B cell (primary cell): ENCODE measurements at regions of chr17 and their contacts with region 1.

Region 1: DNA sequence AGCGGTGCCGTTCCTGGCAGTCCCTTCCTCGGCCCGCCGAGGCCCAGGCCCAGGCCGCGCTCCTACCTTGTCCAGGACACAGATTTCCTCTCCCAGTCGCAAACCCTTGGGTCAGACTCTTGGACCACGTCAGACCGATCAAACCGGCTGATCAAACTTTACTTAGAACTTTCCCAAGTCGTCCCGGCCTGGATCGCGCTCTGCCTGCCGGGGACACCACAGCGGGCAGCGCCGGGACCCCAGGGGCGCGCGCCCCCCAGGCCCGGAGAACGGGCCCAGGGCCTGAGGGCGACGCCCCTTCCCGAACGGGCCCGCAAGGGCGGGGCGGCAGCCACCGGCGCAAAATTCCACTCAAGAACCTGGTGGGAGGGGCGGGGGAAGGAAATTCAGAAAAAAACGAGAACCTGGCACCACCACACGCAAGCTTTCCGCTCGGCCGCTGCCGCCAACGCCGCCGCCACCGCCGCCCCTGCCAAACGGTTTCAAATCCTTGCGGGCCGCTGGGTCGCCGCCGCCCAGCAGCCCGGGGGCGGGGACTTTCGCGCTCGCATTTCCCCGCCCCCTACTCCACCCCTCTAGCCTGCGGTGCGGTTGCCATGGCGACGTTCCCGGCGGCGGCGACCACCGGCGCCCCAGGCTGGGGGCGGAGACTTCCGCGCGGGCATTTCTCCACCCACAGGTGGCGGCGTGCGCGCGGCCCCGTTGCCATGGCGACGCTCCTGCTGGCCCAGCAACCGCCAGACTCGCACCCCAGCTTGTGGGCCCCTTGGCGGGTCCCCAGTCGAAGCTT is at the start of gene CEP112:
- DNase-seq: peak; percentile 95
- ATAC-seq: peak; percentile 79
- H3K4me3 ChIP-seq: peak within 1 kb of the TSS; percentile 44 to 72 (median 64)
- H3K4me3 Mint-ChIP-seq: peak within 1 kb of the TSS; percentile 90
- H3K27ac ChIP-seq: peak within 1 kb of the TSS; percentile 68 to 85
- H3K27ac Mint-ChIP-seq: peak within 1 kb of the TSS; percentile 92
- H3K4me1 ChIP-seq: peaks cover 32% of the 10 kb centered on the region in 2 donors
- H3K4me1 Mint-ChIP-seq: peaks cover 32% of the 10 kb centered on the region
- H3K27me3 ChIP-seq: no peaks in the 10 kb centered on the region
- H3K27me3 Mint-ChIP-seq: no peaks in the 10 kb centered on the region
- CTCF ChIP-seq: no peak
- total RNA-seq, gene CEP112: 4.6 and 8.5 TPM in 2 replicates

Region 2: DNA sequence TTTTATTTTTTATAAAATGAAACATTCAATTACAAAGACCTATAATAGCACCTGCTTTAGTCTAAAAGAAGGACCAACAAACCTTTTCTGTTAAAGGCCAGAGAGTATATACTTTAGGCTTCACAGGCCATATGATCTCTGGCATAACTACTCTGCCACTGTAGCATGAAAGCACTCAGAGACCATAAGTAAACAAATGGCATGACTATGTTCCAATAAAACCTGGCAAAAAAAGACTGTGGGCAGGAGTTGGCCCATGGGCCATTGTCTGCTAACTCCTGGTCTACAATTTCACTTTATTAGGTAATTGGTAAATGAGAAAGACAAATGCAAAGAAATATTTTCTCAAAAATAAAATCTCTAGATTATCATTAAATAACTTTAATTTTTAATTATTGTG is 14.7 kb before region 1 on chr17:
- CTCF ChIA-PET with region 1: no interaction called
- POLR2A ChIA-PET with region 1: no interaction called
- intact Hi-C with region 1: no loop called
- DNase-seq: no peak
- ATAC-seq: no peak
- H3K4me3 ChIP-seq: no peak overlapping the region
- H3K4me3 Mint-ChIP-seq: no peak overlapping the region
- H3K27ac ChIP-seq: no peak overlapping the region
- H3K27ac Mint-ChIP-seq: no peak overlapping the region
- H3K4me1 ChIP-seq: no peaks in the 10 kb centered on the region
- H3K4me1 Mint-ChIP-seq: no peaks in the 10 kb centered on the region
- H3K27me3 ChIP-seq: no peaks in the 10 kb centered on the region
- H3K27me3 Mint-ChIP-seq: no peaks in the 10 kb centered on the region
- CTCF ChIP-seq: no peak

Region 3: GRCh38 chr17:66301797-66302741 is 110.3 kb after region 1 on chr17 and contains the start of gene PRKCA:
- CTCF ChIA-PET with region 1: no interaction called
- POLR2A ChIA-PET with region 1: no interaction called
- intact Hi-C with region 1: loop called (anchors 1 kb)
- DNase-seq: peak; percentile 73
- ATAC-seq: peak; percentile 83
- H3K4me3 ChIP-seq: peak within 1 kb of the TSS; percentile 33 to 86 (median 55)
- H3K4me3 Mint-ChIP-seq: peak within 1 kb of the TSS; percentile 84
- H3K27ac ChIP-seq: no peak within 1 kb of the TSS
- H3K27ac Mint-ChIP-seq: peak within 1 kb of the TSS; percentile 55
- H3K4me1 ChIP-seq: peaks cover 13 to 14% of the 10 kb centered on the region in 2 donors
- H3K4me1 Mint-ChIP-seq: peaks cover 14% of the 10 kb centered on the region
- H3K27me3 ChIP-seq: peaks cover 0 to 40% (median 11%) of the 10 kb centered on the region in 4 experiments
- H3K27me3 Mint-ChIP-seq: peaks cover 23% of the 10 kb centered on the region
- CTCF ChIP-seq: no peak
- total RNA-seq, gene PRKCA: 3.6 and 7.7 TPM in 2 replicates